Esophagus squamous epithelium (tissue), 5 donors: ENCODE measurements at regions of chr10 and their contacts with region 1.

Region 1: GRCh38 chr10:44932517-44933450 is 21.6 kb downstream of the TMEM72 start:
- DNase-seq: peak; percentile 43
- H3K4me3 ChIP-seq: no peak overlapping the region
- H3K27ac ChIP-seq: no peak overlapping the region
- H3K4me1 ChIP-seq: peaks cover 0 to 25% (median 10%) of the 10 kb centered on the region in 3 donors
- H3K27me3 ChIP-seq: no peaks in the 10 kb centered on the region
- CTCF ChIP-seq: peak; percentile 83 to 95 (median 90)
- POLR2A ChIP-seq: no peak

Region 2: GRCh38 chr10:44745920-44746319 is 186.9 kb before region 1 on chr10:
- intact Hi-C with region 1: no loop called
- DNase-seq: no peak
- H3K4me3 ChIP-seq: no peak overlapping the region
- H3K27ac ChIP-seq: no peak overlapping the region
- H3K4me1 ChIP-seq: no peaks in the 10 kb centered on the region
- H3K27me3 ChIP-seq: no peaks in the 10 kb centered on the region
- CTCF ChIP-seq: no peak
- POLR2A ChIP-seq: no peak

Region 3: DNA sequence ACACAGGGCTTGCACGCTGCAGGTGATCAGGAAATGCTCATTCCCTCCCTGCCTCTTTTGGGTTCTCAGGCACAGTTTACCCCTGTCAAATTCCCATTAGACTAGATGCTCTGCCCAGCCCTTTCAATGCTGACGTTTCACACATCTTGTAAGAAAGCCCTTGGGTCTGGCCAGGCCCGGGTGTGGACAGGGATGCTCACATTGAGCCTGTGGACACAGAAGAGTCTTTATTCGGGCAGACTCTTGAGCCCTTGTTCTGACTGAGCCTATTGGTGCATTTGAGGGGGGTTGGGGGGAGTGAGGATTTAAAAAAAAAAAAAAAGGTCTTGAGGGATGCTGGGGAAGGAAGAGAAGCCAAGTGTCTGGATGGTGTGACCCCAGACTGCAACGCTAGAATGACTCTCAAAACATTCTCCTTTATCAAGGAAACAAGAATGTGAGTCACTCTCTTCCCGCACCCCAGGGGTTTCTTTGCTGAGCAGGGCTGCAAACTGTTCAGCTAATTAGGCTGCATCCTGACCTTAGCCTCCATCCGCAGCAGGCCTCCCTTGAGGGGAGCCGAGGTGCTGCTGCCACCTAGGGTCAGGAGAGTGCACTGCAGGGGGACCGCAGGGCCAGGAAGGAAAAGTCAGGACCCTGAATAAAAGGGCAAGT is 75.3 kb before region 1 on chr10:
- intact Hi-C with region 1: no loop called
- DNase-seq: no peak
- H3K4me3 ChIP-seq: no peak overlapping the region
- H3K27ac ChIP-seq: no peak overlapping the region
- H3K4me1 ChIP-seq: peaks cover 0 to 5% (median 0%) of the 10 kb centered on the region in 3 donors
- H3K27me3 ChIP-seq: no peaks in the 10 kb centered on the region
- CTCF ChIP-seq: peak; percentile 58 to 96 (median 78)
- POLR2A ChIP-seq: no peak

Region 4: DNA sequence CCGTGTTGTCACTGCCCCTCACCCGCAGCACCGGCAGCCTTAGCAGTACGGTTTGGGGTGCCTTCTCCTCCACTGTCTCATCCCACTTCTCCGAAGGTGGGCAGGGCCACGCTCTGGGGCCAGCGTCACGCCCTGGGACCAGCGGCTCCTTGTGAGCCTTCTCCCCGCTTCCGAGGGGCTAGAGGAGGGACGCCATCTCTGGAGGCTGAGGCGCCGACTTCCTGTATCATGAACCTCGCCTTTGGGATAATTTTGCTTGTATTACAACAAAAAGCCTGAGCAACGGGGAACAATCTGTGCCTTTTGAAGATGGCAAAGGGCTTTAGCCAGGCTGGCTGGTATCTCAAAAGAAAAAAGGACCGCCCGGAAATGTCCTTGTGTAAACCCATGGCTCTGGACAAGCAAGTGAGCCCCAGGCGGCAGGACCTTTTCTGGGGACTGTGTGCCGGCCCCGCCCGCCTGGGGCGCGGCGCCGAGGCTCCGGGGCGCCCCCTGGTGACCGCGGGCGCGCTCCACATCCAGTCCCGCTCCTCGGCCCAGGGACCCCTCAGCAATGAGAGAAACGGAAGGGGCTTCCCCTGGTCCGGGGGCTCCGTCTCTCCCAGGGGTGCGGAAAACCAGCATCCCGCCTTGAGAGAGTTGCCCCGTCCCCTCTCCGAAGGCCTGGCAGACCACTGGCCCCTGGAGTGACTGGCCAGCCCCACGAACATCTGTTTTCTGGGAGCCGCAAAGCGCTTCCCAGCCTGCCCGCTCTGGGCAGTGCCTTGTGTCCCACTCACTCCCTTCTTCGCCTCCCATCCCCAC is 42.0 kb after region 1 on chr10:
- intact Hi-C with region 1: loop called (anchors 5 kb)
- DNase-seq: no peak
- H3K4me3 ChIP-seq: peak overlapping the region; percentile 21 to 74 (median 51)
- H3K27ac ChIP-seq: peak overlapping the region; percentile 66 to 86 (median 82)
- H3K4me1 ChIP-seq: peaks cover 32 to 74% (median 37%) of the 10 kb centered on the region in 3 donors
- H3K27me3 ChIP-seq: no peaks in the 10 kb centered on the region
- CTCF ChIP-seq: peak; percentile 90 to 97 (median 95)
- POLR2A ChIP-seq: peak in 1 of 4 donors; percentile 34